ENCODE measurements at regions of chr10 and their contacts with region 1.

Region 1: GRCh38 chr10:110918643-110919363 is at the start of gene BBIP1:
- DNase-seq: no peak
- H3K4me3 Mint-ChIP-seq: peak within 1 kb of the TSS; percentile 92
- H3K27ac Mint-ChIP-seq: peak within 1 kb of the TSS; percentile 99
- H3K4me1 Mint-ChIP-seq: peaks cover 39% of the 10 kb centered on the region
- H3K27me3 Mint-ChIP-seq: no peaks in the 10 kb centered on the region
- total RNA-seq, gene BBIP1: 36.4 to 43.9 TPM

Region 2: GRCh38 chr10:110425684-110426293 is 493.0 kb before region 1 on chr10:
- CTCF ChIA-PET with region 1: no interaction called
- POLR2A ChIA-PET with region 1: no interaction called
- intact Hi-C with region 1: loop called (anchors 10 kb)
- DNase-seq: peak; percentile 88
- H3K4me3 Mint-ChIP-seq: peak overlapping the region; percentile 30
- H3K27ac Mint-ChIP-seq: peak overlapping the region; percentile 96
- H3K4me1 Mint-ChIP-seq: peaks cover 66% of the 10 kb centered on the region
- H3K27me3 Mint-ChIP-seq: no peaks in the 10 kb centered on the region

Region 3: DNA sequence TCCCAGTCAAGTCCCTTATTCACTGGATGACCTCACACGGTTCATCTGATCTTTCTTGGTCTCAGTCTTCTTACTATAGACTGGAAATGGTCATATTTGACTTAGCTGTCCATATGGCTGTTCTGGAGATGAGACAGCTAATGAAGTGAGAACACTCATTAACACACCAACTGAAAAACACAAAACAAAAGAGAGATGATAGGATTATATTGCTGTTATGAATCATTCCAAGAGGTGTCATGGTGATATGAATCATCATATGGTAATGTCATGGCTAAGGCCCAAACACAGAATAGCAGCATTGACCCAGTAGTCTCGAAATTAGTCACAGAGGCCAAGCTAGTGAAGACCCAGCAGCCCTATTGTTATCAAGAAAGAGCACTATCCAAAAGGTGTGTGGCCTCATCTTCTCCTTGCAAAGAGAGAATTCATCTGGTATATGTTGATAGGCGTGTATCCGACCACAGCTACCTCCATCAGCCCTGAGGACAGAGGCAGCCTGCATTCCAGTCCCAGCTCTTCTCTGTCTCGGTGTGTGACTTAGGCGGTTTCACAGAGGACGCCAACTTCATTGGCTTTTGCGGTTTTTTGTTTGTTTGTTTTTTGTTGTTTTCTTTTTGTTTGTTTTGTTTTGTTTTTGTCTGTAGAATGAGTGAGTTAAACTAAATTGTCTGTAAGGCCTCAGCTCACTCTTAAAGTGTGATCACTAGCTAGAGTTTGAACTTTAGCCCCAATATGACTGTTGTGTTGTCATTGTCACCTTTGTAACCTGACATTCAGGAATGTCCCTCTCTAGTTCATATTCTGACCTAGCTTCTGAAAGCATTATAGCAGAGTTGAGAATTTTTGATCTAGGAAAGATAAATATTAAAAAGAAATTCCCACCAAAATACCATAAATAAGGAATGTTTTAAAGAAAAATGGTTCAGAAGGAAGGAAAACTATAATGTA is 144.5 kb before region 1 on chr10:
- CTCF ChIA-PET with region 1: interaction called, 3 read pairs
- POLR2A ChIA-PET with region 1: interaction called, 5 read pairs
- intact Hi-C with region 1: loop called (anchors 1 kb)
- DNase-seq: peak; percentile 69
- H3K4me3 Mint-ChIP-seq: peak overlapping the region; percentile 42
- H3K27ac Mint-ChIP-seq: peak overlapping the region; percentile 79
- H3K4me1 Mint-ChIP-seq: peaks cover 40% of the 10 kb centered on the region
- H3K27me3 Mint-ChIP-seq: no peaks in the 10 kb centered on the region

Region 4: DNA sequence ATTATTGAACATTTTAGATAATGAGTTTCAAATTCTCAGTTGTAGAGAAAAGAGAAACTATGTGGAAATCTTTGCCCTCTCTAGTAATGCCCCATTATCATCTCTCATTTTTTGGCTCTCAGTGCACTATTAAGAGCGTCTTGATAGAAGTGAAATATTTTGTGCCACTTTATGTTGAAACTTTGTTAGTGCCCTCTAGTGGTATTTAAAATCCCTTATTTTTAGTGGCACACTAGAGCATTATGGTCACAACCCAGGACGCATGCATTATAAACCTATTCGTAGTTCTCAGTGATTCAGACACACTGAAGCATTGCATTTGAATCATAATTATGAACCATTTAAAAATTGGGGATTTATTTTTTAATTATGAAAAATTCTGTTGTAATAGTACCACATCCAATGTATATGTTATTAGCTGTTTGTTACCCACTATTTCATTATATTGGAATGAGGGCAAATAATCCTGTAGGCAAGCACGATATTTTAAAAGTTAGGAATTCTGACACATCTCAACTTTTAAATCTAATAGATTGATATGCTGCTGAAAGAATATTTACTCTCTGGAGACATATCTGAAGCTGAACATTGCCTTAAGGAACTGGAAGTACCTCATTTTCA is 25.1 kb before region 1 on chr10:
- CTCF ChIA-PET with region 1: interaction called, 22 read pairs
- POLR2A ChIA-PET with region 1: interaction called, 6 read pairs
- intact Hi-C with region 1: no loop called
- DNase-seq: no peak
- H3K4me3 Mint-ChIP-seq: no peak overlapping the region
- H3K27ac Mint-ChIP-seq: peak overlapping the region; percentile 4
- H3K4me1 Mint-ChIP-seq: peaks cover 47% of the 10 kb centered on the region
- H3K27me3 Mint-ChIP-seq: no peaks in the 10 kb centered on the region

Region 5: DNA sequence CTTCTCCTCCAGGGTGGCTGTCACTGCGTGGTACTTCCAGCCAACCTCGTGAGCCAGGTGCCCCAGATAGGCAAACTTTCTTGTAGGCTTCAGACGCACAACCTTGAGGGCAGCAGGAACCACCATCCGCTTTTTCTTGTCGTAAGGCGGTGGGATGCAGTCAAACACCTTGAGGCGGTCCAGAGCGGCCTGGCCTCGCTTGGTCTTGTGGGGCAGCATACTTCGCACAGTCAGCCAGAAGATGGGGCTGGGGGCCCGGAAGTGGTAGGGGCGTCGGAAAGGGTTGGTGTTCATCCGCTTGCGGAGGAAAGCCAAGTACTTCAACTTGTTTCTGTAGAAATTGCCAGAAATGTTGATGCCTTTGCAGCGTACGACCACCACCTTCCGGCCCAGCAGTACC is 18.0 kb after region 1 on chr10:
- CTCF ChIA-PET with region 1: no interaction called
- POLR2A ChIA-PET with region 1: no interaction called
- intact Hi-C with region 1: no loop called
- DNase-seq: no peak
- H3K4me3 Mint-ChIP-seq: no peak overlapping the region
- H3K27ac Mint-ChIP-seq: no peak overlapping the region
- H3K4me1 Mint-ChIP-seq: peaks cover 24% of the 10 kb centered on the region
- H3K27me3 Mint-ChIP-seq: no peaks in the 10 kb centered on the region

Region 6: DNA sequence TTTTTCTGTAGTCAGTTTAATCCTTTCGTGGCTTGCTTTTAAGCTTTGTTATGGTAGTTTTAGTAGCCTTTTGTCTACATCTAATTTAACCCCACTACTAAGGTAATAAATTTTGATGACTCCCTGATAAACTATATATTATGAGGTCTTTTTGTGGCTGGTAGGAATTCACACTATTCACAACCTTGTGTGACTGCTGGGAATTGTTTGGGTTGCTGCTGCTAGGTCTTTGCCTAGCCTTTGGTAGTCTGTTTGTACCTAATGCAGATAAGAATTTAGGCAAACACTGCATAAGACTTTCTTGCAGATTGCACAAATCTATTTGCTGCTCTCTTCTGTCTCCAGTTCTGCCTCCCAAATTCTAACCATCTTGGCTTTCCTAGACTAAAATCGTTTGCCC is 58.9 kb after region 1 on chr10:
- CTCF ChIA-PET with region 1: no interaction called
- POLR2A ChIA-PET with region 1: no interaction called
- intact Hi-C with region 1: no loop called
- DNase-seq: no peak
- H3K4me3 Mint-ChIP-seq: no peak overlapping the region
- H3K27ac Mint-ChIP-seq: no peak overlapping the region
- H3K4me1 Mint-ChIP-seq: peaks cover 38% of the 10 kb centered on the region
- H3K27me3 Mint-ChIP-seq: no peaks in the 10 kb centered on the region

Region 7: DNA sequence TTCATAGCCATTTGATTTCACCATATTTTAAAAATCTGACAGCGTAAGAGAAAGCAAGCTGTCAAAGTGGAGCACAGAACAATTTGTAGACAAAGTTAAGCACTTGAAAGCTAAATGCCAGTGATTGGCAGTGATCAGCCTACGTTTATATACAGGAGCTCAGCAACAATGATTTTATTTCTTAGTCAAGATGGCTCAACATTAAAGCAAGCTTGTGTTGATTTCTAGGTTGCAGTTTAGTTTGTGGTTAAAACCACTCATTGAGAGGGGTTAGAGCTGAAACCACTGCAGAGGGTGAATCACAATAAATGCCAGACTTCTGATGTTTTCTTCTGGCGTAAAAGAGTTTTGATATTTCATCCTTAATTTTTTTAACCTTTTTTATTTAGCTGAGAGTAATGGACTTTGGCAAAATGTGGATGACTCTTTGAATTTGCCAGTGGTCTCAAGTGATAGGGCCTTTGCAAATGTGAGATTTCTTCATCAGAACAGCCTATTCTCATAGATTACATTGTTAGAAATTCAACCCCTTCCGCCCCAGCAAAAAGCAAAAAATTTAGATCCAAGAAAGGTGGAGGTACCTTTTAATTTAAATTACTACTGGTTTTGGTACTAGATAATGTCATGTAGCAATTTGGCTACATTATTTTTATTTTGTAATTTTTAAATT is 74.4 kb after region 1 on chr10:
- CTCF ChIA-PET with region 1: no interaction called
- POLR2A ChIA-PET with region 1: interaction called, 6 read pairs
- intact Hi-C with region 1: loop called (anchors 1 kb)
- DNase-seq: no peak
- H3K4me3 Mint-ChIP-seq: no peak overlapping the region
- H3K27ac Mint-ChIP-seq: no peak overlapping the region
- H3K4me1 Mint-ChIP-seq: peaks cover 28% of the 10 kb centered on the region
- H3K27me3 Mint-ChIP-seq: no peaks in the 10 kb centered on the region